Aorta (tissue), 5 donors: ENCODE measurements at regions of chr13 and their contacts with region 1.

Region 1: DNA sequence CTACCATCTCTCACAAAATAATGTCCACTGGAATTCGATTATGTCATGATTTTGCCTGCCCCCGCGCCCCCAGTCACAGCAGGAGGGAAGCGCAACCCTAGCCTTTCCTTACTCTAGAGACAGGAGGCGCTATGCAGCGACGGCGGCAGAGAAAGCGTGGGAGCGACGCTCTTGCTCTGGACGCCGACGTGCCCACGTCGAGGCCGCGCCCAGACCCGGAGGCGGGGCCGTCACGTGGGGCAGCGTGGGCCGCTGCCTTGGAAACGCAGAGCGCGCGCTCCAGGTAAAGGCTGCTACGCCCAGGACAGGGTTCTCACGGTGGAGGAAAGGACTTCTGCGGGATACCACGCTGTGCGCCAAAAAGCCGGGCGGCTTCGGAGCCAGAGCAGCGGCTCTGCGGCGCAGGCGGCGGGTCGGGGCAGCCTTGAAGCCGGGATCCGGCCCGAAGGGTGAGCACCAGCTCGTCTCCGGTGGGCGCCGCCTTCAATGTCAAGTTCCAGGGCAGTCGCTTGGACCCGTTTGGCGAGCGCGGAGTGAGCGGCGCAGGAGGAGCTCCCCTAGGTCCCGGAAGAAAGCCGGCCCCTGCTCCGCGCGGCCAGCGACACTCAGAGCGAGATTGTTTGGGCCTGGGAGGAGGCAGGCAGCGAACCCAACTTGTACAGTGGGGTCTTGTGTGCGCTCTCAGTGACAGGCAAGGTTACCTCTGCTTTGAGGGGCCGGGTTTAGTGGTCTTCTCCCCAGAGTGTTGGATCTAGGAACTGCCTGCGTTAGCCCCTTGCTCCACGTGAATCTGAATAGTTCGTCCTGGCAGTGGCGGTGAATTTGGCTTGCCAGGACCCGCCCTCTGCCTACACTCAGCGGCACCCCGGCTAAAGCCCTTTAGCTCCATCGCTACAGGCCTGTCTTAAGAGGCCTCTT is 121.7 kb downstream of the MRPL57 start:
- DNase-seq: peak; percentile 90 to 93
- ATAC-seq: peak; percentile 100
- H3K4me3 ChIP-seq: peak overlapping the region; percentile 55 to 76
- H3K27ac ChIP-seq: peak overlapping the region in 1 of 2 donors; percentile 4
- H3K4me1 ChIP-seq: no peaks in the 10 kb centered on the region
- H3K27me3 ChIP-seq: no peaks in the 10 kb centered on the region

Region 2: GRCh38 chr13:20945952-20946383 is 352.2 kb before region 1 on chr13:
- intact Hi-C with region 1: loop called in 1 of 2 experiments (anchors 5 kb)
- DNase-seq: peak in 1 of 2 donors; percentile 69
- ATAC-seq: no peak
- H3K4me3 ChIP-seq: no peak overlapping the region
- H3K27ac ChIP-seq: no peak overlapping the region
- H3K4me1 ChIP-seq: no peaks in the 10 kb centered on the region
- H3K27me3 ChIP-seq: no peaks in the 10 kb centered on the region

Region 3: GRCh38 chr13:21176220-21176982 is 121.8 kb before region 1 on chr13 and contains the starts of genes MRPL57 and SKA3:
- intact Hi-C with region 1: loop called in 1 of 2 experiments (anchors 10 kb)
- DNase-seq: peak; percentile 95 to 97
- ATAC-seq: peak; percentile 98
- H3K4me3 ChIP-seq: peak within 1 kb of the TSS; percentile 40 to 92
- H3K27ac ChIP-seq: peak within 1 kb of the TSS; percentile 34 to 96
- H3K4me1 ChIP-seq: no peaks in the 10 kb centered on the region
- H3K27me3 ChIP-seq: no peaks in the 10 kb centered on the region
- total RNA-seq, gene MRPL57: 8.4 to 10.3 TPM
- total RNA-seq, gene SKA3: 0.91 to 2.3 TPM

Region 4: GRCh38 chr13:21458813-21459701 is 160.9 kb after region 1 on chr13 and contains the start of gene ZDHHC20:
- intact Hi-C with region 1: loop called in 1 of 2 experiments (anchors 2 kb)
- DNase-seq: peak; percentile 90 to 98
- ATAC-seq: peak; percentile 97
- H3K4me3 ChIP-seq: peak within 1 kb of the TSS; percentile 70 to 99
- H3K27ac ChIP-seq: peak within 1 kb of the TSS; percentile 4 to 93
- H3K4me1 ChIP-seq: no peaks in the 10 kb centered on the region
- H3K27me3 ChIP-seq: no peaks in the 10 kb centered on the region
- total RNA-seq, gene ZDHHC20: 49.5 to 55.5 TPM

Region 5: DNA sequence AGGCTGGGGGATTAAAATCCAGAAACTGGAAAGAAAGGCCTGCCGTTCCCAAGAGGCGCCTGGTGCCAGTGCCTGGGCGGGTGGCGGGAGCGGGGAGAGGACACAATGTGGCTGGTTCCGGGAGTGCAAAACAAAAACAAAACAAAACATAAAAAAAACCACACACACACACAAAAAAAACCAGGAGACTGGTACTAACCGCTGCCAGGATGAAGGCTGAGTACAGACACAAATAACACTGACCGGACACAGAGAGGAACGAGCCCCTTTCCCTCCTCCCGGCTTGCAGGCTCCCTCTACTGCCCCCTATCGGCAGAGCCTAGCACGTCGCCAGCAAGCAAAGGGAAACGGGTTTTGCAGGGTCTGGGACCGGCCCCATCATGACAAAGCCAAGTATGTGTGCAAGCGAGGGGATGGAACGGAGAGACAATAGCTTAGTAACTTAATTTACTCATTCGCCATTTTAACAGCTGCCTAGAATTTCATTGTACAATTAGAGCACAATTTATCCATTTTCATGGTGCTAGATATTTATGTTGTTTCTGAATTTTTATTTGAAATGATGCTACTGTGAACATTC is 178.8 kb after region 1 on chr13:
- intact Hi-C with region 1: loop called in 1 of 2 experiments (anchors 5 kb)
- DNase-seq: peak; percentile 88 to 91
- ATAC-seq: peak; percentile 91
- H3K4me3 ChIP-seq: peak overlapping the region; percentile 2 to 11
- H3K27ac ChIP-seq: no peak overlapping the region
- H3K4me1 ChIP-seq: no peaks in the 10 kb centered on the region
- H3K27me3 ChIP-seq: no peaks in the 10 kb centered on the region